BJ (cell line): ENCODE measurements at regions of chr5 and their contacts with region 1.

Region 1: DNA sequence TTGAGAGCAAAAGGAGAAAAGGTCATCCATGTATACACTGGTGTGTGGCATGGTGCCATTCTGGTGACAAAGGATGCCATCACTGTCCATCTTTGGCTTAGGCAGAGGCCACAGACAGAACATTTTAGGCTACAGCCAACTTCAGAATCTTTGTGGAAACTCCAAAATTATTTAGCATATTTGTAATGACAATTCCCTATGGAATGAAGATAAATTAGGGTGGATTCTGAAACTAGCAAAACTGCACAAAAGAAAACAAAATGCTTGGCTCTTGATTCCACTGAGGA is 92.5 kb downstream of the FBXW11 start:
- DNase-seq: no peak
- H3K4me3 ChIP-seq: no peak overlapping the region
- H3K27me3 ChIP-seq: no peaks in the 10 kb centered on the region
- CTCF ChIP-seq: no peak

Region 2: GRCh38 chr5:171418316-171418981 is 495.5 kb before region 1 on chr5:
- CTCF ChIA-PET with region 1: interaction called, 52 read pairs
- POLR2A ChIA-PET with region 1: interaction called, 5 read pairs
- DNase-seq: peak; percentile 11
- H3K4me3 ChIP-seq: peak overlapping the region; percentile 17
- H3K27me3 ChIP-seq: no peaks in the 10 kb centered on the region; the same call in none of the 2 replicates
- CTCF ChIP-seq: peak; percentile 96

Region 3: DNA sequence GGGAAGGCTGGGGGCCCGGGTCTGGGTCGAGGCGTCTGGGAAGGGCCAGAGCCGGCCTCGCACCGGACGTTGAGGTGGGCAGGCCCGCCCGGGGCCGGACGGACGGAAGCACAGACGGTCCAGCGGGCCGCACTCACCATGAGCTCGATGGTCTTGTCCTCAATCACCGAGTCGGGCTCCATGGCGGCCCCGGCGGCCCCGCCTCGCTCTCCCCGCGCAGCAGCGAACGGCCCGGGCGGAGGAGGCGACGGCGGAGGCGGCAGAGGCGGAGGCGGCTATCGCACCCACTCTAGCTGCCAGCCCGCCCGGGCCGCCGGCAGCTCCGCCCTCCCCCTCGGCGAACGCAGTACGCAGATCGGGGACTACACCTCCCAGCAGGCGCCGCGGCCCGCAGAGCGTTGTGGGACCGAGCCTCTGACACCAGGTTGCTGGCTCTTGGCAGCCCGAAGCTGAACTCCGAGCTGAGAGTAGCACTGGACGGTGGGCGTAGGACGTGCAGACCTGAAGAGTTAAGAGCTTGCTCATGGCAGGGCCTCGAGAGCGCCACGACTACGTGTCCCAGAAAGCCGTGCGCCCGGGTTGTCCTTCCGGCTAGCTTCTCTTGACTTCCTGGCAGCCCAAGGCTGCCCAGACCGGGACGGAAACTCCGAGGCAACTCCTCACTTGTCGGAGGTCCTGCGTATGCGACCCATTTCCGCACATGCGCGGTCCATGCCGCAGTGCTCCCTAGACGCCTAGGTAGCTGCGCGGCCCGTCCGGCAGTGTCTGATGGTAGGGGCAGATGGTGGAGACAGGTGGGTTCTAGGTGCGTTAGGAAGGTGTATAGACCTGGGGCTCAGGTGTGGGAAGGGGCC is 92.6 kb after region 1 on chr5 and contains the start of gene FBXW11:
- CTCF ChIA-PET with region 1: interaction called, 22 read pairs
- POLR2A ChIA-PET with region 1: no interaction called
- DNase-seq: peak; percentile 79
- H3K4me3 ChIP-seq: peak within 1 kb of the TSS; percentile 88
- H3K27me3 ChIP-seq: no peaks in the 10 kb centered on the region
- CTCF ChIP-seq: no peak
- polyA plus RNA-seq, gene FBXW11: 55.5 and 70.1 TPM in 2 replicates

Region 4: DNA sequence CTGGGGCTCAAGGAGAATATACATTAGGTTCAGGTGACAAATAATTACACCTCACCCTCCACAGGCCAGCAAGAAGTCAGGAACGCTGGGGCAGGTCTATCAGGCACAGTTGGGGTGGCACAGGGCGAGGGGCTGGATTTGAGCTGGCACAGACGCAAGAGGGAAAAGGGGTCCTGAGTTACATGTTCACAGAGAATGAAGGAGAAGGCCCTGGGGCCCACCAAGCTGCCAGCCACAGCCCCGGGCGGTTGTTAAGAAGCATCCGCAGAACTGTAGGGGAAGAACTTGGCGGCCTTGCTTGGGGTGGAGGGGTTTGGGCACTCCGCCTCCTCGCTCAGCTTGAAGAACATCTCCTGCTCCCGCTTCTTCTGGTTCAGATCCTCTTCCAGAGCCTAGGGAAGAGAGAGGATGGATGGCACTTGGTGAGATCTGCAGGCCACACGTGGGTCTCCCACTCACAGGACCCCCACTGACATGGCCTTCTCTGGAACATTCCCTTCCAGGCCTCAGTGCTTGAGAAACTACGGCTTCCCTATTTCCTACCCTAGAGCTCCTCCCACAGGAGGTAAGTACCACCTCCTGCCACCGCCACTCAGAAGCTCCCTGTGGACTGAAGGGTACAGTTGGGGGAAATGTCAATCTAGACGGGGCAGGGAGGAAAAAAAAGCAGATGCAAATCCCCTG is 130.8 kb after region 1 on chr5:
- CTCF ChIA-PET with region 1: interaction called, 63 read pairs
- POLR2A ChIA-PET with region 1: no interaction called
- DNase-seq: no peak
- H3K4me3 ChIP-seq: no peak overlapping the region
- H3K27me3 ChIP-seq: no peaks in the 10 kb centered on the region
- CTCF ChIP-seq: no peak

Region 5: GRCh38 chr5:172059661-172060100 is 145.8 kb after region 1 on chr5:
- CTCF ChIA-PET with region 1: interaction called, 48 read pairs
- POLR2A ChIA-PET with region 1: no interaction called
- DNase-seq: no peak
- H3K4me3 ChIP-seq: no peak overlapping the region
- H3K27me3 ChIP-seq: no peaks in the 10 kb centered on the region
- CTCF ChIP-seq: peak; percentile 59